Panc1 (cell line): ENCODE measurements at regions of chr5 and their contacts with region 1.

Region 1: GRCh38 chr5:37043688-37044087 is 167.1 kb downstream of the NIPBL start:
- DNase-seq: peak; percentile 4
- ATAC-seq: peak; percentile 79; the same call in 1 of the 2 replicates
- H3K4me3 ChIP-seq: no peak overlapping the region
- H3K27ac ChIP-seq: no peak overlapping the region
- H3K4me1 ChIP-seq: no peaks in the 10 kb centered on the region
- H3K27me3 ChIP-seq: no peaks in the 10 kb centered on the region
- CTCF ChIP-seq: peak; percentile 45; the same call in 1 of the 2 replicates

Region 2: GRCh38 chr5:36815871-36816270 is 227.8 kb before region 1 on chr5:
- CTCF ChIA-PET with region 1: no interaction called
- POLR2A ChIA-PET with region 1: no interaction called
- in situ Hi-C with region 1: no loop called
- intact Hi-C with region 1: no loop called
- DNase-seq: no peak
- ATAC-seq: no peak
- H3K4me3 ChIP-seq: no peak overlapping the region
- H3K27ac ChIP-seq: no peak overlapping the region
- H3K4me1 ChIP-seq: no peaks in the 10 kb centered on the region
- H3K27me3 ChIP-seq: peaks cover 7% of the 10 kb centered on the region; the same call in 1 of the 2 replicates
- CTCF ChIP-seq: no peak

Region 3: GRCh38 chr5:36934740-36935356 is 108.8 kb before region 1 on chr5:
- CTCF ChIA-PET with region 1: no interaction called
- POLR2A ChIA-PET with region 1: interaction called, 25 read pairs
- in situ Hi-C with region 1: no loop called
- intact Hi-C with region 1: no loop called
- DNase-seq: no peak
- ATAC-seq: no peak
- H3K4me3 ChIP-seq: no peak overlapping the region
- H3K27ac ChIP-seq: no peak overlapping the region
- H3K4me1 ChIP-seq: peaks cover 6% of the 10 kb centered on the region
- H3K27me3 ChIP-seq: no peaks in the 10 kb centered on the region
- CTCF ChIP-seq: no peak

Region 4: DNA sequence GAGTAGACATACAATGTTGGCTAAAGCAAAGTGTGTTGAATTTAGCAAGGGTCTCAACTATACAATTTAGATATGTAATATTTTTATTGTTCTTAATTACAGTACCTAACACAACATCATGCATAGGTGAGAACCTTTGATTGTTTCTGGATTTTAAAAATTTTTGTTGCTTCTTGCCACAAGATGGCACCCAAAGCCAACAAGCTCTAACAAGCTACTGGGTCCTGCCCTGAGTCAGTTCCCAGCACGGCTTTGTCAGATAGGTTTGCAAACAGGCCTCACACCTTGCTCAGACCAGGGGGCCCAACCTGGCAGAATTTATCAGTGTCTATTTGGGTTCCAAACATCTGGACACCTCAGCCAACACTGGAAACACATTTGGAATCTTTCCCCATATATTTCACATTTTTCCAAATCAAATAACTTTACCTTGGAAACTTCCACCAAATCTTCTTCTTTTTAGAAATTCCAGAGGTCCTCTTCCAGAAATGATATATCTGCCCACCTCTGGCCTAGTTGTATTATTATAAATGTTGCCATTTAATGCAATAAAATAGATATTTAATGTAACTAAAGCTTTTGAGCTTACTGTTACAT is 1165.2 kb after region 1 on chr5:
- CTCF ChIA-PET with region 1: no interaction called
- POLR2A ChIA-PET with region 1: no interaction called
- in situ Hi-C with region 1: no loop called
- intact Hi-C with region 1: no loop called
- DNase-seq: peak; percentile 28
- ATAC-seq: peak; percentile 81
- H3K4me3 ChIP-seq: no peak overlapping the region
- H3K27ac ChIP-seq: no peak overlapping the region
- H3K4me1 ChIP-seq: no peaks in the 10 kb centered on the region
- H3K27me3 ChIP-seq: peaks cover 9% of the 10 kb centered on the region; the same call in 1 of the 2 replicates
- CTCF ChIP-seq: peak; percentile 82